ENCODE measurements at regions of chr4 and their contacts with region 1.

Region 1: GRCh38 chr4:89111833-89112563 is 665 bp downstream of the TIGD2 start:
- DNase-seq: no peak
- H3K4me3 ChIP-seq: peak overlapping the region; percentile 86
- H3K27ac ChIP-seq: peak overlapping the region; percentile 30 to 70
- H3K4me1 ChIP-seq: peaks cover 7% of the 10 kb centered on the region
- H3K27me3 ChIP-seq: no peaks in the 10 kb centered on the region
- CTCF ChIP-seq: no peak
- EP300 ChIP-seq: no peak
- POLR2A ChIP-seq: no peak

Region 2: DNA sequence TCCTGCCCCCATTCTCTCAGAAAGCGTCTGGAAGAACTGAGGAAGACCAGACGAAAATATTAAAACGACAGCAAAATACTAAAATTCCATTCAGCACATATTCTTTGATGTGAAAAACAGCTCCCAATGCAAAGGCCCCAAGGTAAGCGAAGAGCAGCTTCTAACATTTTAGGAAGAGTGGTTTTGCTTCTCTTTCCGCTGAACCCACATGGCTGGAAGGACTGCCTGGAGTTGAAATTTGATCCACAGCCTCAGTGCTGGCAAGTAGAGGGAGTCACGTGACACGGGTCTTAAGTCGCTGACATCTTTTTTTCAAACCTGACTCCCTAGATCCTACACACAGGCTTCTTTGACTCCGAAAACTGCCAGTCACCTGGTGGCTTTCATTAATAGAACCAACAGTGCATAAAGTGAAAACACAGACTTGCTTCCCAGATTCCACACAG is 55.0 kb before region 1 on chr4 and contains the start of gene FAM13A:
- intact Hi-C with region 1: loop called in 1 of 4 experiments (anchors 2 kb)
- DNase-seq: peak; percentile 77 to 87 (median 81)
- H3K4me3 ChIP-seq: peak within 1 kb of the TSS; percentile 56
- H3K27ac ChIP-seq: peak within 1 kb of the TSS; percentile 5 to 8
- H3K4me1 ChIP-seq: peaks cover 10% of the 10 kb centered on the region
- H3K27me3 ChIP-seq: no peaks in the 10 kb centered on the region
- CTCF ChIP-seq: no peak
- EP300 ChIP-seq: no peak
- POLR2A ChIP-seq: no peak
- total RNA-seq, gene FAM13A: 29.3 to 51.8 (median 43.0) TPM

Measured in ovary (tissue), 10 donors.